ENCODE measurements at regions of chr11 and their contacts with region 1.

Region 1: GRCh38 chr11:27472398-27473016 is at the start of gene LGR4:
- DNase-seq: peak; percentile 95
- H3K4me3 Mint-ChIP-seq: peak within 1 kb of the TSS; percentile 88
- H3K27ac Mint-ChIP-seq: peak within 1 kb of the TSS; percentile 93
- H3K4me1 Mint-ChIP-seq: peaks cover 21% of the 10 kb centered on the region
- H3K27me3 Mint-ChIP-seq: no peaks in the 10 kb centered on the region
- CTCF ChIP-seq: no peak
- total RNA-seq, gene LGR4: 50.0 and 51.4 TPM in 2 replicates

Region 2: DNA sequence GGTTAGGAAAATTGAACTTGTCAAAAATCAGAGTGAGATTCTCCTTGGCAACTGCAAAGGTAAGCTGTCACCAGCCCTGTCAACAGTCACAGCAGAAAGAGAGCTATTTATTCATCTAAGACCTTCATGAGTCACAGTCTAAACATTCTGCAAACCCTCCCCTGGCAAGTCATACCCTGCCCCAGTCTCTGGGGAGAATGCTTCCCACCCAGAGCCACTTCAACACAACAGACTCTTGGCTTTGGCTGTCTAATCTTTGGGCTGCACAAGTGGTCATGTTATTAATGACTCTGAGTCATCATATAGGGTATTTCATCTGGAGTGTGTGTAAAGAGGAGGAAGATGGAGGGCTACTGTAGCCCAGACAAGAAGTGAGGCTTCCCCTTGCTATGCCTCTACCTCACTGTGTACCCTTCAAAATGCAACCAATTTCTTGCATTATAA is 262.9 kb before region 1 on chr11:
- CTCF ChIA-PET with region 1: interaction called, 7 read pairs
- intact Hi-C with region 1: loop called (anchors 5 kb)
- DNase-seq: peak; percentile 81
- H3K4me3 Mint-ChIP-seq: no peak overlapping the region
- H3K27ac Mint-ChIP-seq: peak overlapping the region; percentile 89
- H3K4me1 Mint-ChIP-seq: peaks cover 73% of the 10 kb centered on the region
- H3K27me3 Mint-ChIP-seq: no peaks in the 10 kb centered on the region
- CTCF ChIP-seq: no peak

Region 3: DNA sequence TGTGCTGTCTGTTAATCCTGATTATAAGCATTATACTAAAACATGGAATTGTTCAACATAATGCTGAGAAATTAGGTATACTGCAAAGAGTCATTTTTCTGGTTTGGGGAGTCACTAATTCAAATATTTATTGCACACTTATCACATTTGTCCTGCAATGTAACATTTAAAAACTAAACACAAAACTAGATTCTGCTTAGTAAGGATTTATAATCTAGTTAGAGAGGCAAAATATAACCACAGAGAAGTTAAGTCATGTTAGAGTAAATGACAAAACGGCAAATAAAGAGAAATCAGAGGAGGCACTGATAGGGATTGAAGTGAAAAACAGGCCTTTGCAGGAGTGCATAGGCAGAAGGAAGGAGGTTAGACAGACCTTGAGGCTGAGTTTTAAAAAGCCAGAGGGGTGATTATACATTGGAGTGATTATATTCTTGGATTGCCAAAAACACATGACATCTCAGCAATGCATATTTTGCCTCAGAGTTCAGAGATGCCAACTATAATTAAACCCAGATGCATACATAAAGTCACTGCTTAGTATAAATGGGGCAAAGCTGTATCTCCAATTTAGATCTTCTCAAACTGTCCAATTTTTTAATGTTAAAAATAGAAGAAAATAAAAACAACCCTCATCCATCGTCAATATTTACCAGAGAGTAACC is 159.2 kb before region 1 on chr11:
- CTCF ChIA-PET with region 1: interaction called, 5 read pairs
- intact Hi-C with region 1: loop called (anchors 5 kb)
- DNase-seq: no peak
- H3K4me3 Mint-ChIP-seq: peak overlapping the region; percentile 30
- H3K27ac Mint-ChIP-seq: peak overlapping the region; percentile 56
- H3K4me1 Mint-ChIP-seq: peaks cover 54% of the 10 kb centered on the region
- H3K27me3 Mint-ChIP-seq: no peaks in the 10 kb centered on the region
- CTCF ChIP-seq: no peak

Region 4: DNA sequence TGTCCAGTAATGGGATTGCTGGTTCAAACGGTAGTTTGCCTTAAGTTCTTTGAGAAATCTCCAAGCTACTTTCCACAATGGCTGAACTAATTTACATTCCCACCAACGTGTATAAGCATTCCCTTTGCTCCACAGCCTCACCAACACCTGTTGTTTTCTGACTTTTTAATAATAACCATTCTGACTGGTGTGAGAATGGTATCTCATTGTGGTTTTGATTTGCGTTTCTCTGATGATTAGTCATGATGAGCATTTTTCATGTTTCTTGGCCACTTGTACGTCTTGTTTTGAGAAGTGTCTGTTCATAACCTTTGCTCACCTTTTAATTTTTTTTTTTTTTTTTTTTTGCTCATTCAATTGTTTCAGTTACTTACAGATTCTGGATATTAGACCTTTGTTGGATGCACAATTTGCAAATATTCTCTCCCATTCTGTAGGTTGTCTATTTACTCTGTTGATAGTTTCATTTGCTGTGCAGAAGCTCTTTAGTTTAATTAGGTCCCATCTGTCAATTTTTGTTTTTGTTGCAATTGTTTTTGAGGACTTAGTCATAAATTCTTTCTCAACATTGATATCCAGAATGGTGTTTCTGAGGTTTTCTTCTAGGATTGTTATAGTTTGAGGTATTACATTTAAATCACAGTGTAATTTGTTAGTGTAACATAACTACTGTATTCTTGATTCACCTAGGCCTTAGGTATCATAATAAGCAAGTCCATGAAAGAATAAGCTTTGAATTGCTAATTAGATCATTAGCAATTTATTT is 142.5 kb before region 1 on chr11:
- CTCF ChIA-PET with region 1: interaction called, 10 read pairs
- intact Hi-C with region 1: no loop called
- DNase-seq: no peak
- H3K4me3 Mint-ChIP-seq: no peak overlapping the region
- H3K27ac Mint-ChIP-seq: no peak overlapping the region
- H3K4me1 Mint-ChIP-seq: no peaks in the 10 kb centered on the region
- H3K27me3 Mint-ChIP-seq: no peaks in the 10 kb centered on the region
- CTCF ChIP-seq: no peak

Region 5: GRCh38 chr11:27392278-27393114 is 80.0 kb before region 1 on chr11:
- CTCF ChIA-PET with region 1: interaction called, 7 read pairs
- intact Hi-C with region 1: loop called (anchors 2 kb)
- DNase-seq: no peak
- H3K4me3 Mint-ChIP-seq: no peak overlapping the region
- H3K27ac Mint-ChIP-seq: peak overlapping the region; percentile 59
- H3K4me1 Mint-ChIP-seq: peaks cover 80% of the 10 kb centered on the region
- H3K27me3 Mint-ChIP-seq: no peaks in the 10 kb centered on the region
- CTCF ChIP-seq: no peak

Region 6: GRCh38 chr11:27429761-27430412 is 42.6 kb before region 1 on chr11:
- CTCF ChIA-PET with region 1: no interaction called
- intact Hi-C with region 1: loop called (anchors 5 kb)
- DNase-seq: no peak
- H3K4me3 Mint-ChIP-seq: no peak overlapping the region
- H3K27ac Mint-ChIP-seq: no peak overlapping the region
- H3K4me1 Mint-ChIP-seq: peaks cover 9% of the 10 kb centered on the region
- H3K27me3 Mint-ChIP-seq: no peaks in the 10 kb centered on the region
- CTCF ChIP-seq: no peak